Activated CD4-positive, alpha-beta T cell treated with anti-CD3 and anti-CD28 coated beads, Interleukin-2, amount 10 ng/mL, durations not matched to agents 24 days and 14 days (primary cell): ENCODE measurements at regions of chr15 and their contacts with region 1.

Region 1: DNA sequence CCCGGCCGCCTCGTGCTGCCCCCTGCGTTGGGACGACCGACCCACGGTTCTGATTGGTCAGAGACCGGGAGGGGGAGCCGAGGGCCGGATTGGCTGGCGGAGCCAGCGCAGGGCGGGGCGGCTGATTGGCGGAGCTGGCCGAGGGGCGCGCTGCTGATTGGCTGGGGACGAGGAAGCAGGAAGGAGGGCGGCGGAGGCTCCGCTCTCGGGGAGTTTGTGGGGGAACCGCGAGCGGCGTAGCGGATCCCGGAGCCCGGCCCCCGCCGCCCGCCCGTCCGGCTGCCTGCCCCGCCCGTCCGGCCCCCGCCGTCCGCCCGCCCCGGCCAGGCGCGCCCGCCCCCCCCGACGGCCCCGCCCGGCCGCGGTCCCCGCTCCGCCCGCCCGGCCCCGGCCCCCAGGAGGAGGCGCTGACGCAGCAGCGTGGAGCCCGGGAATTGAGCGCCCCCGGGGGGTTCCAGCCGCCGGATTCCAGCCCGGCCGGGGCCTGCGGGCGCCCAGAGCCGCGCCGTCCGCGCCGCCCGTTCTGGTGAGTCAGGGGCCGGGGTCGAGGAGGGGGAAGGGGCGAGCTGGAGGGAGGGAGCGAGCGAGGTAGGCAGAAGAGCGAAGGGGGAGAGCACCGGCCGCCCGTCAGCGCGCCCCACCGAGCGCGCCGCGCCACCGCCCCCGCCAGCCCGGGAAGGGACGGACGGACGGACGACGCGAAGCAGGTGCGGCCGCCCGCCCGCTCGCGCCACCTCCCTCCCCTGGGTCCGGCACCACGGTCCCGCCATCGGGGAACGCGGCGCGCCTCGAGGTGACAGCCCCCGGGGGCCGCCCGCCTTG is at the start of gene BAHD1:
- DNase-seq: peak; percentile 99
- H3K4me3 Mint-ChIP-seq: peak within 1 kb of the TSS; percentile 97
- H3K27ac Mint-ChIP-seq: peak within 1 kb of the TSS; percentile 87
- H3K4me1 Mint-ChIP-seq: peaks cover 42% of the 10 kb centered on the region
- H3K27me3 Mint-ChIP-seq: peaks cover 56% of the 10 kb centered on the region
- total RNA-seq, gene BAHD1: 23.9 and 26.2 TPM in 2 replicates

Region 2: GRCh38 chr15:40405501-40406381 is 35.2 kb before region 1 on chr15 and contains the start of gene IVD:
- intact Hi-C with region 1: loop called (anchors 5 kb)
- DNase-seq: peak; percentile 94
- H3K4me3 Mint-ChIP-seq: peak within 1 kb of the TSS; percentile 82
- H3K27ac Mint-ChIP-seq: peak within 1 kb of the TSS; percentile 77
- H3K4me1 Mint-ChIP-seq: peaks cover 41% of the 10 kb centered on the region
- H3K27me3 Mint-ChIP-seq: no peaks in the 10 kb centered on the region
- total RNA-seq, gene IVD: 66.6 and 70.7 TPM in 2 replicates

Region 3: DNA sequence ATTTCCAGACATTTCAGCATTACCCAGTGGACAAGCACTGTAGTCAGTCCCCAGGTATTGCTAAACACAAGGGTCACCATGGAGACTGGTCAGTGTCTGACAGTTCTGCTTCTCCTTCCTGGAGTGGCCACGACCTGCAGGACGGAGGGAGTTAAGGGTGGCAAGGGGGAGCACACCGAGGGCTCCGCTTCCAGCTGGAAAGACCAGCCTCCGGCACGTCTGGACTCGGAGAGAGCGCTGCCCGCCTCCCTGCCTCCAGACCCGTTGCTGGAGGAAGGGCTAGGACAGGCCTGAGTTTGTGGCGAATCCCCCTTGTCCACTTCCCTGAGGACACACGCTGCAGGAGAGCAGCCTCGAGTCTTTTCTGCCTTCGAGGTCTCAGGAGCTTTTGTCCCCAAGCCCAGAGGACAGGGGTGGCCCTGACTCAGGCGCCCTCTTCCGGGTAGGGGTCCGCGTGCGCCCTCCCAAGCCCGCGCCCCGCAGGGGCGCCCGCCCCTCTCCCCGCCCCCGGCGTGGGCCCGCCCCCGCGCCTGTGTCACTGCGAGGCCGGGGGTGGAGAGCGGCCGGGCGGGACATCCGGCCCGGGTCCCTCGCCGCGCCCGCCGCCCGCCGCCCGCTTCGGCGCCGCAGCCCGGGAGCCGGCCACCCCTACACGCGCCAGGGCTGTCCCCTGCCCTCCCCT is 29.6 kb after region 1 on chr15 and contains the start of gene CHST14:
- intact Hi-C with region 1: loop called (anchors 1 kb)
- DNase-seq: peak; percentile 90
- H3K4me3 Mint-ChIP-seq: peak within 1 kb of the TSS; percentile 90
- H3K27ac Mint-ChIP-seq: peak within 1 kb of the TSS; percentile 83
- H3K4me1 Mint-ChIP-seq: peaks cover 26% of the 10 kb centered on the region
- H3K27me3 Mint-ChIP-seq: peaks cover 1% of the 10 kb centered on the region
- total RNA-seq, gene CHST14: 9.0 and 9.7 TPM in 2 replicates

Region 4: GRCh38 chr15:40481341-40482074 is 40.6 kb after region 1 on chr15:
- intact Hi-C with region 1: no loop called
- DNase-seq: no peak
- H3K4me3 Mint-ChIP-seq: no peak overlapping the region
- H3K27ac Mint-ChIP-seq: no peak overlapping the region
- H3K4me1 Mint-ChIP-seq: no peaks in the 10 kb centered on the region
- H3K27me3 Mint-ChIP-seq: peaks cover 46% of the 10 kb centered on the region

Region 5: GRCh38 chr15:40506964-40507571 is 66.1 kb after region 1 on chr15:
- intact Hi-C with region 1: loop called (anchors 2 kb)
- DNase-seq: peak; percentile 90
- H3K4me3 Mint-ChIP-seq: peak overlapping the region; percentile 20
- H3K27ac Mint-ChIP-seq: no peak overlapping the region
- H3K4me1 Mint-ChIP-seq: peaks cover 14% of the 10 kb centered on the region
- H3K27me3 Mint-ChIP-seq: peaks cover 65% of the 10 kb centered on the region